Activated CD8-positive, alpha-beta T cell treated with anti-CD3 and anti-CD28 coated beads for 36 hours (primary cell): ENCODE measurements at regions of chr22 and their contacts with region 1.

Region 1: DNA sequence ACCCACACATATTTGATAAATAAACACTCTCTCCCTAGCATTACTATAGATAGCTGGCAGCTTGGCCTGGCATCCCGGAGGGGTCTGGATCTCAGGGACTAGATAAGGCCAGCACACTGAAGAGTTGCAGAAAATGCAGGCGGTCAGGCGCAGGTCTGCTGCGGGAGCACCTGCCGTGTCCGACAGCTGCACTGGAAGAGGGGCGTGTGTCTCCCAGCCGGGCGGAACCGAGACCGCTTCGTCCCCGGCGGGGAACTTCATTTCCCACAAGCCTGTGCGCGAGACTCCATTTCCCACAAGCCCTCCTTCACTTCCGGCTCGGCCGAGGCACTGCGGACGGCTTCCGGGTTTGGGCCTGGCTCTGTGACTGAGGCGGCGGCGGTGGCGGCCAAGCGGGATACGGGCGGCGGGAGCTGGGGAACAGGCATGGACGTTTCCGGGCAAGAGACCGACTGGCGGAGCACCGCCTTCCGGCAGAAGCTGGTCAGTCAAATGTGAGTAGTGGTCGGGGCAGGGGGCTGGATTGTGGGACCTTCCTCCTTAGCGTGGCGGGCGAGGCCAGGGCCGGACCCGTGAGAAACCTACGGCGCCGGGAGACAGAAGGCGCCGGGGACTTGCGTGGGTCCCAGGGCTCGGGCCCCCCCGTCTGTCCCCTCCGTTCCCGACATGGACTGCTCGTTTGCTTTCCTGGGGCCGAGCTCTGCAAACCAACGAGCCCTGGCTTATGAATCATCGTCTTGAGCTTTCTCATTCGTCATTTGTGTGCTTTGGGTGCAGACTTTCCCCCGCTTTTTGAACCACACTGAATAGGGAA is at the start of gene MED15:
- DNase-seq: peak; percentile 95
- ATAC-seq: peak; percentile 87
- H3K4me3 Mint-ChIP-seq: peak within 1 kb of the TSS; percentile 99
- H3K27ac Mint-ChIP-seq: peak within 1 kb of the TSS; percentile 100
- H3K4me1 Mint-ChIP-seq: peaks cover 48% of the 10 kb centered on the region
- H3K27me3 Mint-ChIP-seq: no peaks in the 10 kb centered on the region
- CTCF ChIP-seq: no peak
- total RNA-seq, gene MED15: 110 to 118 TPM

Region 2: GRCh38 chr22:20463324-20464095 is 44.0 kb before region 1 on chr22:
- CTCF ChIA-PET with region 1: interaction called, 4 read pairs
- POLR2A ChIA-PET with region 1: interaction called, 13 read pairs
- intact Hi-C with region 1: no loop called
- DNase-seq: peak; percentile 53
- ATAC-seq: peak; percentile 62
- H3K4me3 Mint-ChIP-seq: peak overlapping the region; percentile 37
- H3K27ac Mint-ChIP-seq: peak overlapping the region; percentile 97
- H3K4me1 Mint-ChIP-seq: peaks cover 48% of the 10 kb centered on the region
- H3K27me3 Mint-ChIP-seq: no peaks in the 10 kb centered on the region
- CTCF ChIP-seq: no peak

Region 3: GRCh38 chr22:20523086-20523983 is 15.9 kb after region 1 on chr22:
- CTCF ChIA-PET with region 1: interaction called, 5 read pairs
- POLR2A ChIA-PET with region 1: interaction called, 53 read pairs
- intact Hi-C with region 1: no loop called
- DNase-seq: peak; percentile 62
- ATAC-seq: peak; percentile 22
- H3K4me3 Mint-ChIP-seq: no peak overlapping the region
- H3K27ac Mint-ChIP-seq: peak overlapping the region; percentile 75
- H3K4me1 Mint-ChIP-seq: peaks cover 72% of the 10 kb centered on the region
- H3K27me3 Mint-ChIP-seq: no peaks in the 10 kb centered on the region
- CTCF ChIP-seq: no peak

Region 4: DNA sequence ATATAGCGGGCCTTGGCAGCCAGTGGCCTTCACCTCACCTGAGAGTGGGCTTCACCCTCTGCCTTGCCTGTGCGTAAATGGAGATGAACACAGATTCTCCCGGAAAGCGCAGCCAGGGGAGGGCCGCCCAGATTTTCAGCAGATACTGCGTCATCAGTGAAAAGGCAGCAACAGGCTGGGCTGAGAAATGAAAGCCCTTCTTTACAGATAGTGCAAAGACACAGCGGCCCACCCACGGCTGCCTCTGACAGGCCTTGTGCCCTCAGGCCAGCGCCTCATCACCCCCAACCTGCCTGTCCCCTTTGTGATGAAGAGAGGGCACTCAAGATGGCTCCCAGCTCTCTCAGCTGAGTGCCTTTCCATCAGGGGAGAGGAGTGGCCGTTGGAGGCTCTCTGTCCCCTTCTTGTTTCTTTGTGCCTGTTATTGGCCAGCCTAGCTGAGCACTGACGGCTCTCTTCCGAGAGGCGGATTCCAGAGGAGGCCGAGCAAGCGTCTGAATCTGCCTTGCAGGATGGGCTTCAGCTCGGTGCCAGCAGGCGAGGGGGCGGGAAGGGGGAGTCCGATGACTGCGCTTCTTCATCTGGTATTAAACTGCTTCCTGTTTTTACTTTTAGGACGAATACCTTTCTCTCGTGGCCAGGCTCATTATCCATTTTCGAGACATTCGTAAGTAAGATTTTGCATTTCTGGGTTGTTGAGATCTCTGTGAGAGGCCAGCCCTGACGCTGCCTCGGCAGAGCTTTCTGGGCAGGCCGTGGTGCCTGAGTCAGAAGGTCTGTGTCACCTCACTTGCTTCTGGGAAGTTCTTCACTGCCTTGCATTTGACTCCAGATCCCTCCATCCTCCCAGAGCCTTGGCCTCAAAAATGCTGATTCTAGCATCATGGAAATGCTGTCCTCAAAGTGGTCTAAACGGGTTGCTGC is 43.6 kb after region 1 on chr22:
- CTCF ChIA-PET with region 1: interaction called, 25 read pairs
- POLR2A ChIA-PET with region 1: interaction called, 86 read pairs
- intact Hi-C with region 1: loop called (anchors 5 kb)
- DNase-seq: peak; percentile 88
- ATAC-seq: peak; percentile 70
- H3K4me3 Mint-ChIP-seq: peak overlapping the region; percentile 65
- H3K27ac Mint-ChIP-seq: peak overlapping the region; percentile 97
- H3K4me1 Mint-ChIP-seq: peaks cover 84% of the 10 kb centered on the region
- H3K27me3 Mint-ChIP-seq: no peaks in the 10 kb centered on the region
- CTCF ChIP-seq: no peak

Region 5: DNA sequence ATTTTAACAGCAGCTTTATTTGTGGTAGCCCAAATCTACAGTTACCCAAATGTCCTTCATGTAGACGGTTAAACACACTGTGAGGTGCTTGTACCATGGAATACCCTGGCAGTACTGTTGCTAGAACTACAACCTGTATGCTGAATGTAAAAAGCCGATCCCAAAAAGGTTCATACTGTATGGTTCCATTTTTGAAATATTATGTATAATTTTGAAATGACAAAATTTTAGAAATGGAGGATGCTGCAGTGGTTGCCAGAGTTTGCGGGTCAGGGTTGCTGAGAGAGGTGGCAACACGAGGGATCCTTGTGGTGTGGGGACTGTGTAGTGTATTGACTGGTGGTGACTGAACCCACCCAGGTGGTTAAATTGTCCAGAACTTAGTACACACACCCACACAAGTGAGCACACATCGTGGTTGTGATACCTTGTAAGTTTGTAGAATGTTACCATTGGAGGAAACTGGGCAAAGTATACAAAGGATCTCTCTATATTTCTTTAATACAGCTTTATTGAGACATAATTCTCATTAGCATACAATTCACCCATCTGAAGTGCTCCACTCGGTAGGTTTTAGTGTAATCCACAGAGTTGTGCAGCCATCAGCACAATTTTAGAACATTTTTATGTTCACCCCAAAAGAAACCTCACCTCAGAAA is 55.9 kb after region 1 on chr22:
- CTCF ChIA-PET with region 1: interaction called, 25 read pairs
- POLR2A ChIA-PET with region 1: interaction called, 18 read pairs
- intact Hi-C with region 1: no loop called
- DNase-seq: peak; percentile 63
- ATAC-seq: peak; percentile 46
- H3K4me3 Mint-ChIP-seq: no peak overlapping the region
- H3K27ac Mint-ChIP-seq: peak overlapping the region; percentile 13
- H3K4me1 Mint-ChIP-seq: peaks cover 69% of the 10 kb centered on the region
- H3K27me3 Mint-ChIP-seq: no peaks in the 10 kb centered on the region
- CTCF ChIP-seq: no peak